Naive thymus-derived CD4-positive, alpha-beta T cell (primary cell): ENCODE measurements at regions of chr20 and their contacts with region 1.

Region 1: GRCh38 chr20:54649511-54649962 is 174.1 kb downstream of the DOK5 start:
- DNase-seq: peak; percentile 5 to 57 (median 26)
- ATAC-seq: peak; percentile 48
- H3K4me3 ChIP-seq: no peak overlapping the region
- H3K4me3 Mint-ChIP-seq: no peak overlapping the region
- H3K27ac ChIP-seq: no peak overlapping the region
- H3K27ac Mint-ChIP-seq: no peak overlapping the region
- H3K4me1 ChIP-seq: no peaks in the 10 kb centered on the region
- H3K4me1 Mint-ChIP-seq: no peaks in the 10 kb centered on the region
- H3K27me3 ChIP-seq: no peaks in the 10 kb centered on the region
- H3K27me3 Mint-ChIP-seq: peaks cover 0 to 27% (median 9%) of the 10 kb centered on the region in 5 donors

Region 2: DNA sequence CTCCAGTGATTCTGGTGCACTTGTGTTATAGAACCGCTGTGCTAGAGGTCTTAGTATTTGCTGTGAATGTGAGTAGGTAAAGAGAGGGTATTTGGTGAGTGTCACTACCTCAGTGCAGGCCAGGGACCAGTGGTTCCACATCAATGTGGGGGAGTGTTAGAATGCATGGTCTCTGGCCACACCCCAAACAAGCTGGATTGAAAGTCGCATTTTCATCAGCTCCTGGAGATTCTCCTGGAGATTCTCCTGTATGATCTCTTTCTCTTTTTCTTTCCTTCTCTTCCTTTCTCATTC is 552.4 kb before region 1 on chr20:
- CTCF ChIA-PET with region 1: interaction called, 3 read pairs
- POLR2A ChIA-PET with region 1: no interaction called
- intact Hi-C with region 1: loop called (anchors 1 to 2 kb)
- DNase-seq: no peak
- ATAC-seq: no peak
- H3K4me3 ChIP-seq: no peak overlapping the region
- H3K4me3 Mint-ChIP-seq: no peak overlapping the region
- H3K27ac ChIP-seq: no peak overlapping the region
- H3K27ac Mint-ChIP-seq: no peak overlapping the region
- H3K4me1 ChIP-seq: no peaks in the 10 kb centered on the region
- H3K4me1 Mint-ChIP-seq: peaks cover 0 to 5% (median 2%) of the 10 kb centered on the region in 7 donors
- H3K27me3 ChIP-seq: no peaks in the 10 kb centered on the region
- H3K27me3 Mint-ChIP-seq: peaks cover 0 to 15% (median 5%) of the 10 kb centered on the region in 5 donors

Region 3: GRCh38 chr20:54199721-54200176 is 449.8 kb before region 1 on chr20:
- CTCF ChIA-PET with region 1: no interaction called
- POLR2A ChIA-PET with region 1: no interaction called
- intact Hi-C with region 1: loop called in 1 of 2 experiments (anchors 5 kb)
- DNase-seq: peak; percentile 32 to 69 (median 53)
- ATAC-seq: peak; percentile 78
- H3K4me3 ChIP-seq: no peak overlapping the region
- H3K4me3 Mint-ChIP-seq: no peak overlapping the region
- H3K27ac ChIP-seq: no peak overlapping the region
- H3K27ac Mint-ChIP-seq: no peak overlapping the region
- H3K4me1 ChIP-seq: no peaks in the 10 kb centered on the region
- H3K4me1 Mint-ChIP-seq: peaks cover 0 to 4% (median 0%) of the 10 kb centered on the region in 7 donors
- H3K27me3 ChIP-seq: no peaks in the 10 kb centered on the region
- H3K27me3 Mint-ChIP-seq: peaks cover 0 to 4% (median 0%) of the 10 kb centered on the region in 5 donors

Region 4: GRCh38 chr20:54219751-54220426 is 429.6 kb before region 1 on chr20:
- CTCF ChIA-PET with region 1: interaction called, 4 read pairs
- POLR2A ChIA-PET with region 1: no interaction called
- intact Hi-C with region 1: loop called in 1 of 2 experiments (anchors 1 kb)
- DNase-seq: no peak
- ATAC-seq: no peak
- H3K4me3 ChIP-seq: no peak overlapping the region
- H3K4me3 Mint-ChIP-seq: no peak overlapping the region
- H3K27ac ChIP-seq: no peak overlapping the region
- H3K27ac Mint-ChIP-seq: peak overlapping the region in 1 of 9 donors; percentile 83
- H3K4me1 ChIP-seq: peaks cover 0 to 17% of the 10 kb centered on the region in 2 donors
- H3K4me1 Mint-ChIP-seq: peaks cover 18 to 34% (median 24%) of the 10 kb centered on the region in 7 donors
- H3K27me3 ChIP-seq: no peaks in the 10 kb centered on the region
- H3K27me3 Mint-ChIP-seq: no peaks in the 10 kb centered on the region

Region 5: DNA sequence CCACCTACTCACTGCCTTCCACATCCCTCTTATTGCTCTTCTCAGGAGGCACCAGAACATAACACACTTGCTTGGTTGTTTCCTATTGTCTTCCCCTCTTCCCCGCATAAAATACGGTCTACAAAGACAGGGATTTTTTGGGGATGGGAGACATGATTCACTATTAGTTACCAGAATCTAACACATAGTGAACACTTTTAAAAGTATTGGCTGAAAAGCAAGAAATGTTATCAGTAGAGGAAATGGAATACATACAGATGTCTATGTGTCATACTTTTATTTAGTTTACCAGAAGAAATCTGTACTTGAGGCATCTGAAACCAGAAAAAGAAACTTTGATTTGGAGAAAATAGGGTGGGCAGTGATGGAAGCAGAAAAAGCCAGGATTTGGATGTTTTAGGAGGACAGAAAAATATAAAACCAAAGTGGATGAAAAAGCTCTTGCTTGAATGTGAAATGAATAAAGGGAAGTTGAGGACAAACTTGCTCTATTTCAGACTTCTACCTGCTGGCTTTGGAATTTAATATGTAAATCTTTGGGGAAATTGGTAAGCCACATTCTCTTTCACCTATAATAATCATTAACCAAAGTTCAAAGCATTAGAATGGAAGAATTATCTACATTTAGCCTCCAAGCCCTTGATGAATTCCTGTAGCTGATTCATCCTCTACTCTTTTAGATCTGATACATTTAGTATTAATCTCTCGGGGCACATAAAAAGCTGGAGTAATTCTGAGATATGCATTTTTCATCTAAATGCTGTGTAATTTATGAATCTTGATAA is 91.5 kb before region 1 on chr20:
- CTCF ChIA-PET with region 1: no interaction called
- POLR2A ChIA-PET with region 1: no interaction called
- intact Hi-C with region 1: no loop called
- DNase-seq: no peak
- ATAC-seq: no peak
- H3K4me3 ChIP-seq: no peak overlapping the region
- H3K4me3 Mint-ChIP-seq: no peak overlapping the region
- H3K27ac ChIP-seq: no peak overlapping the region
- H3K27ac Mint-ChIP-seq: no peak overlapping the region
- H3K4me1 ChIP-seq: no peaks in the 10 kb centered on the region
- H3K4me1 Mint-ChIP-seq: no peaks in the 10 kb centered on the region
- H3K27me3 ChIP-seq: no peaks in the 10 kb centered on the region
- H3K27me3 Mint-ChIP-seq: peaks cover 0 to 13% (median 11%) of the 10 kb centered on the region in 5 donors

Region 6: DNA sequence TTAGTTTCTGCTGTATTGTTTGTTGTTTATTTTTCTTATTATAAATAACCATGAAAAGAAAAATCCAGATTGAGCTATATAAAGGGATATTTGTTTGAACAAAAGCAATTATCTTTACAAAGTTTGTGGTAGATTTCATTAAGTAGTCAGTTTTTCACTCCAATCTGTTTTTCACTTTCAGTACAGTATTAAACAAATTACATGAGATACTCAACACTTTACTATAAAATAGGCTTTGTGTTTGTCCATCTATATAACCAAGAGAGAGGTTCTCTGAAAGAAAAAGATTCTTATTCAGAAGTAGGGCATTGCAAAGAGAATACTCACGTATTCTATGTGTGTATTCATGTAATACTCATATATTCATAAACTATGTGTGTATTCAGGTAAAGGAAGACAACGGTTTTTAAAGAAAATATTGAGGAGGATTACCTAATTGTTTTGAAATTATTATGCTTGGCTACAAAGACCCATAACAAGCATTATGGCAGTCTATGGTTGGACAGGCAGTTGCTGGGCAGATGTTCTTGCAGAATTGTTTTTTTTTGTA is 99.1 kb after region 1 on chr20:
- CTCF ChIA-PET with region 1: no interaction called
- POLR2A ChIA-PET with region 1: no interaction called
- intact Hi-C with region 1: no loop called
- DNase-seq: no peak
- ATAC-seq: no peak
- H3K4me3 ChIP-seq: no peak overlapping the region
- H3K4me3 Mint-ChIP-seq: no peak overlapping the region
- H3K27ac ChIP-seq: no peak overlapping the region
- H3K27ac Mint-ChIP-seq: no peak overlapping the region
- H3K4me1 ChIP-seq: no peaks in the 10 kb centered on the region
- H3K4me1 Mint-ChIP-seq: no peaks in the 10 kb centered on the region
- H3K27me3 ChIP-seq: no peaks in the 10 kb centered on the region
- H3K27me3 Mint-ChIP-seq: peaks cover 0 to 21% (median 14%) of the 10 kb centered on the region in 5 donors

Region 7: GRCh38 chr20:56343861-56344381 is 1694.4 kb after region 1 on chr20:
- CTCF ChIA-PET with region 1: no interaction called
- POLR2A ChIA-PET with region 1: no interaction called
- intact Hi-C with region 1: loop called in 1 of 2 experiments (anchors 10 kb)
- DNase-seq: peak in 6 of 9 donors; percentile 11 to 57 (median 22)
- ATAC-seq: peak; percentile 66
- H3K4me3 ChIP-seq: no peak overlapping the region
- H3K4me3 Mint-ChIP-seq: peak overlapping the region in 8 of 10 donors; percentile 13 to 52 (median 39)
- H3K27ac ChIP-seq: no peak overlapping the region
- H3K27ac Mint-ChIP-seq: no peak overlapping the region
- H3K4me1 ChIP-seq: no peaks in the 10 kb centered on the region
- H3K4me1 Mint-ChIP-seq: peaks cover 0 to 13% (median 6%) of the 10 kb centered on the region in 7 donors
- H3K27me3 ChIP-seq: peaks cover 0 to 10% of the 10 kb centered on the region in 2 donors
- H3K27me3 Mint-ChIP-seq: peaks cover 46 to 79% (median 73%) of the 10 kb centered on the region in 5 donors